Pancreas (tissue), 10 donors: ENCODE measurements at regions of chr11 and their contacts with region 1.

Region 1: DNA sequence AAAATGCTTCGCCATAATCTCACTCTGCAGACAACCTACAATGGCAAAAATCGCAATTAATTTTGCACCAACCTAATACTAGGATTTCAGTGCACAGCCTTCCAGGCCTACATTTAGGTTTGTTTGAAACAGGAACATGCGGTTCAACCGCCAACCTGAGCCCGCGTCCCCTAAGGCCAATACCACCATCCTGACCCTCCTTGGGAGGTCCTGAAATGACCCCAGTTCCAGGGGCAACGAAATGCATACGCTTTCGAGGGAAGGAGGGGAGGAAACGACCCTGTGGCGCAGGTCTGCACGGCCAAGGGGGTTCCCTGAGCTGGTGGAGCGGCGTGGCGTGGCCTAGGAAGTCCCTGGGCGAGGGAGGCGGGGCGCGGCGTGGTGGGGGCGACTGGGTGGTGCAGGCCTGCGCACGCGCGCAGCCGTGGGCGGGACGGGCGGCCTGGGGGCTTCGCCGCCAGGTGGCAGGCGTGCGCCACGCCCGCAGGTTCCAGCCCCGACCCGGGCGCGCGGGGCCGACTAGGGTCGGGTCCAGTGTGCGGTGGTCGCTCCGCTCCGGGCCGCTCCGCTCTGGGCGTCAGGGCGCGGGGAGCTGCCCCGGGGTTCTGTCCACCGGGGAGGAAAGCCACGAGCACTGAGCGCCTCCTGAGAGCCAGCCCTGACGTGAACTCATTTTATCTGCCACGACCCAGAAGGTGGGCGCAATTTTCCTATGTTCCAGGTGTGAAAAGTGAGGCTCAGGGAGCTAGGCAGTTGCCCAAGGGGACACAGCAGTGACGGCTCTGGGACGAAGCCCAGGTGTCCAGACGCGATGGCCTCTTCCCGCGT is 94.1 kb downstream of the SWAP70 start:
- DNase-seq: peak; percentile 86 to 96 (median 92)
- ATAC-seq: peak; percentile 88 to 93 (median 90)
- H3K4me3 ChIP-seq: peak overlapping the region; percentile 54 to 76 (median 68)
- H3K27ac ChIP-seq: peak overlapping the region; percentile 35 to 83 (median 67)
- H3K4me1 ChIP-seq: peaks cover 6 to 11% (median 10%) of the 10 kb centered on the region in 3 donors
- H3K27me3 ChIP-seq: no peaks in the 10 kb centered on the region
- CTCF ChIP-seq: peak; percentile 83 to 92 (median 88)

Region 2: DNA sequence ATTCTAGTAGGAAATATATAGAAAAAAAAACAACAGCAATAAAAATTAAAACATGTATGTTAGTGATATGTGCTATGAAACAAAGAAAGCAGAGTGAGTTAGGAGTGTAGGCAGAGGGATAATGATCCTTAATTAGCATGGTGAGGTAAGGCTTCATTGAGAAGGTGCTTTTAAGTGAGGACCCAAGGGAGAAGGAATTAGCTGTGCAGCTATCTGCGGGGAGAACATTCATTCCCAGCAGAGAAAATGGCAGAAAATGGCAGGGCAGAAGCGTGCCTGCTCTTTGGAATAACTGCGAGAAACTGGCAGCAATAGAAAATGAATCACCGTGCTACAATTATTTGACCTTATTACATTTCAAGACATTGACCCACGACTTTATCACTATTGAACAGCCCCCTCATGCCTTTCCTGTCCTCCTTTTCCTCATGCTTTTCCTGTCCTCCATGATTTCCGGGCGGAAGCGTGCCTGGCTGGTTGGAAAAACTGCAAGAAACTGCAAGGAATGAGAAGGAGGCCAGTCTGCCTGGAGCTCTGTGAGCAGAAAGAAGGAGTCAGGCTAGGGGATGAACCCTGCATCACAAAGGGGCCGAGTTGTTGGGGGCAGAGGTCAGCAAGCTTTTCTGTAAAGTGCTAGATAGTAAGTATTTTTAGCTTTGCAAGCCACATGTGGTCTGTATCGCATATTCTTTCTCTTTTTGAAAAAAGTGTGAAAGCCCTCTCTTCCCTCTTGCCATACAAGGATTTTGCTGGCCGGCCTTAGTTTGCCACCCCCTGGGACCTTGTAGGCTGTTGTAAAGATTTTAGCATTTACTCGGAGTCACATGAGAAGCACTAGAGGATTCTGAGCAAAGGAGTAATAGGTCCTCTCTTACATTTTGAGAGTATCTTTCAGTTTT is 131.3 kb before region 1 on chr11:
- intact Hi-C with region 1: no loop called
- DNase-seq: no peak
- ATAC-seq: no peak
- H3K4me3 ChIP-seq: no peak overlapping the region
- H3K27ac ChIP-seq: no peak overlapping the region
- H3K4me1 ChIP-seq: no peaks in the 10 kb centered on the region
- H3K27me3 ChIP-seq: no peaks in the 10 kb centered on the region
- CTCF ChIP-seq: no peak

Region 3: GRCh38 chr11:9726321-9727022 is 31.6 kb before region 1 on chr11:
- intact Hi-C with region 1: no loop called
- DNase-seq: no peak
- ATAC-seq: peak; percentile 75 to 85 (median 76)
- H3K4me3 ChIP-seq: no peak overlapping the region
- H3K27ac ChIP-seq: peak overlapping the region in 1 of 4 donors; percentile 6
- H3K4me1 ChIP-seq: peaks cover 0 to 7% (median 0%) of the 10 kb centered on the region in 3 donors
- H3K27me3 ChIP-seq: no peaks in the 10 kb centered on the region
- CTCF ChIP-seq: no peak

Region 4: DNA sequence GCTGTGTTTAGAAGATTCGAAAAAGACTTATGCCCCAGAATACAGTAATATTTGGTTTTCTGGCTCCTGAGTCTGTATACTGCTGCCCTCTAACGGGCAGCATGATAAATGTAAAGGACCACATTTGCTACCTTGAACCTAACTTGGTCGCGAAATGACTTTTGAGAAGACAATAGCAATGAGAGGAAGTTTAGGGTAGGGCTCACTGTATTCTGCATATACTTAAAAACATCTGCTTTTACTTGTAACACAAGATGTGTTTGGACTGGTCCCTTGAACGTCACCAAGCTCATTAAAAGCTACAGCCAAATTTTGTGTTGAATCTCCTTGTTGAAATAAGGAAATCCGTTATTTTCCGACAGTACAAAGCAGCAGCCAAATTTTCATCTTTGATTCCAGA is 215.0 kb after region 1 on chr11:
- intact Hi-C with region 1: loop called in 1 of 3 experiments (anchors 5 kb)
- DNase-seq: peak in 2 of 6 donors; percentile 6 to 32
- ATAC-seq: peak in 3 of 4 donors; percentile 85 to 88 (median 87)
- H3K4me3 ChIP-seq: no peak overlapping the region
- H3K27ac ChIP-seq: no peak overlapping the region
- H3K4me1 ChIP-seq: no peaks in the 10 kb centered on the region
- H3K27me3 ChIP-seq: no peaks in the 10 kb centered on the region
- CTCF ChIP-seq: peak; percentile 17 to 46 (median 42)

Region 5: DNA sequence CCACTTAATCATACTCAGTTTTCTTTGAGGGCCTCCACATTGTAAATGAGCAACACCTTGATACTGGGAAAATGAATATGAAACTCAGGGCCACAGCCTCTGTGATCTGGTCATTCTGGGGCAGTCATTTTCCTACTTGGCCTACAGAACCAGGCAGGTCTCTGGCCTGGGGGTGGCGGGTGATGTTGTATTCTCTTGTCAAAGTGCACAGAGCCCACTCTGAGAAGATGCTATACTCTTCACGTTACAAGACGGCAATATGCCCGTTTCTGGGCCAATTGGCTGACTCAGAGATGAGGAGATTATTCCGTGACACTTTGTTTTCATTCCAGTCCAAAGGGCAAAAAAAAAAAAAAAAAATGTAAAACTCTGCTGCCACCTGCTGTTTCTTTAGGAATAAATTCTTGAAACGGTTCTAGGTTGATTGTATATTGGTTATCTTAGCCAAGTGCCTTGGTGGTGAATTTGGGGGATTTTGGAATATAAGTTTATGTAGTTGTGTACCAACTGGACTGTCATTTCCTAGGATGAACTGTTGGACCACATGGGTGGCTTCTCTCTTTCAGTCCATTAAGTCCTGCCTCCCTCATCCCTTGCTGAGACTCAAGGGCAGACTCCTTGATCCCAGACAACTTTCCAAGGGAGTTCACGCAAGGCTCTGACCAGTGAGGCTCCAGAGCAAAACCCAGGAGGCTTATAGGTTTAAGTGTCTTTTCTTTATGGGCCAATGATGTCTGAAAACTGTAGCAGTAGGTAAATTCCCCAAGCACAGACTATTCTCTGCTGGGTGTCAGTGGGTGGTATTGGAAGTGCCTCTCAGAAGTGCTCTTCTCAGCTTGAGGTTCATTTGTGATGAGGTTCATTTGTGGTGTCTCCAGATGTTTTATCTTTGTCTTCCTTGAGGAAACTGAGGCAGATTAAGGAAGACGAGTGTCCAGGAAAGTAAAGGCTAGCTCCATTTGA is 565.1 kb after region 1 on chr11:
- intact Hi-C with region 1: loop called in 1 of 3 experiments (anchors 10 kb)
- DNase-seq: peak in 4 of 6 donors; percentile 56 to 69 (median 64)
- ATAC-seq: peak; percentile 68 to 82 (median 80)
- H3K4me3 ChIP-seq: no peak overlapping the region
- H3K27ac ChIP-seq: peak overlapping the region in 2 of 4 donors; percentile 53 to 68
- H3K4me1 ChIP-seq: peaks cover 24 to 38% (median 29%) of the 10 kb centered on the region in 3 donors
- H3K27me3 ChIP-seq: no peaks in the 10 kb centered on the region
- CTCF ChIP-seq: peak in 1 of 4 donors; percentile 40